Breast epithelium (tissue), 4 donors: ENCODE measurements at regions of chr4 and their contacts with region 1.

Region 1: GRCh38 chr4:163673848-163674697 is 179.6 kb downstream of the TMA16 start:
- DNase-seq: no peak
- H3K4me3 ChIP-seq: no peak overlapping the region
- H3K27ac ChIP-seq: no peak overlapping the region
- H3K4me1 ChIP-seq: no peaks in the 10 kb centered on the region
- H3K27me3 ChIP-seq: no peaks in the 10 kb centered on the region
- CTCF ChIP-seq: no peak
- POLR2A ChIP-seq: no peak

Region 2: DNA sequence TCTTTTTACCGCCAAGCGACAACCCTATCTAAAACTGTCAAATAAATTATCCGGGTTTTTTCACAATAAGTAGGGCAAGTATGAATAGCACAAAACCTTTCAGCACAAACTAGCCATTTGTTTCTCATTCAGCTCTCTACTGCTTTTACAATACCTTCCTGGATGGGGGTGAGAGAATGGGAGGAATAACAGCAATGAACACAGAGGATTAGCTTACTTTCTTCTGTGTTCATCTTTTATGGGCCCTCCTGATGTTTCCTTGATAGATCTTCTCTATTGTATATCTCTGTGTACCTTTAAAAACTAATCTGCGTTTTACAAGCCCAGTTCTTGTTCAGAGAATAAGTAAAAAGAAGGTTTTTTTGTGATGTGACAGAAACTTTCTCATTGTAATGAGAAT is 1147.6 kb after region 1 on chr4:
- intact Hi-C with region 1: loop called (anchors 5 kb)
- DNase-seq: no peak
- H3K4me3 ChIP-seq: no peak overlapping the region
- H3K27ac ChIP-seq: no peak overlapping the region
- H3K4me1 ChIP-seq: no peaks in the 10 kb centered on the region
- H3K27me3 ChIP-seq: no peaks in the 10 kb centered on the region
- CTCF ChIP-seq: no peak
- POLR2A ChIP-seq: no peak